ENCODE measurements at regions of chr9 and their contacts with region 1.

Region 1: GRCh38 chr9:34536685-34537084 is 13.9 kb upstream of the ENHO start:
- DNase-seq: no peak
- H3K4me3 Mint-ChIP-seq: no peak overlapping the region
- H3K27ac Mint-ChIP-seq: no peak overlapping the region
- H3K4me1 Mint-ChIP-seq: no peaks in the 10 kb centered on the region
- H3K27me3 Mint-ChIP-seq: peaks cover 12% of the 10 kb centered on the region

Region 2: DNA sequence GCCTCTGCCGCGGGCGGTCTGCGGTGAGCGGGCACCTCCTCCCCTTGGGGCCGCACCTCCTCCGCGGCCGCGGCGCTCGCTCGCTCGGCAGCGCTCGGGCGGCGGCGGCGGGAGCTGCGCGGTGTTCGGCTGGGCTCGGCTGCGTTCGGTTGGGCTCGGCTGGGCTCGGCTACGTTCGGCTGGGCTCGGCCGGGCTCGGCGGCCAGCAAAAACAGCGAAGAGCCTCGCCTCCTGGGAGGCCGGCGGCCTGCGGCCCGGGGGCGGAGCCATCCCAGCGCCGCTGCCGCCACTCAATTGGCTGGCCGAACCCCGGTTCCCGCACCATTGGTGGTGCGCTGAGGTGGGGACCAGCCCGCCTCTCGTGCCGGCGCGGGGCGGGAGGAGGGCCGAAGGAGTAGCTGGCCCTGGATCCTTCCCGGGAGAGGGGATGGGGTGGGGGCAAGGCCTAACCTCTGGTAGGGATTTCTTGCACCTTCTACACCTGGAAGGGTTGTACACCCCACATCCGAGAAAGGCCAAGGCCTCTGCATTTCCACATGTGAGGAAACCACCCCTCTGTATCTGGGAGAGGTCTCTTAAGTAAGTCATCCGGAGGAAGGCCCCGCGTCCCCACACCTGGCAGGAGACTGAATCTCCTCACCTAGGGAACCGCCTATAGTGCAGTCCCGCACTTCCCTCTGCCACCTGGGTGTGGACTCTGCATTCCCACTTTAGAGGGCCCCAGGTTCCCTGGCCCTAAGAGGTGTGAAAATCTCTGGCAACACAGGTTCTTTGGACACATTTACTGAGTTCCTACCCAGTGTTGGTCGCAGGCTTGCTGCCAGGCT is 13.5 kb before region 1 on chr9 and contains the start of gene ENHO:
- CTCF ChIA-PET with region 1: interaction called, 10 read pairs
- POLR2A ChIA-PET with region 1: no interaction called
- DNase-seq: peak; percentile 85
- H3K4me3 Mint-ChIP-seq: peak within 1 kb of the TSS; percentile 61
- H3K27ac Mint-ChIP-seq: no peak within 1 kb of the TSS
- H3K4me1 Mint-ChIP-seq: peaks cover 22% of the 10 kb centered on the region
- H3K27me3 Mint-ChIP-seq: peaks cover 40% of the 10 kb centered on the region
- total RNA-seq, gene ENHO: not detected

Region 3: DNA sequence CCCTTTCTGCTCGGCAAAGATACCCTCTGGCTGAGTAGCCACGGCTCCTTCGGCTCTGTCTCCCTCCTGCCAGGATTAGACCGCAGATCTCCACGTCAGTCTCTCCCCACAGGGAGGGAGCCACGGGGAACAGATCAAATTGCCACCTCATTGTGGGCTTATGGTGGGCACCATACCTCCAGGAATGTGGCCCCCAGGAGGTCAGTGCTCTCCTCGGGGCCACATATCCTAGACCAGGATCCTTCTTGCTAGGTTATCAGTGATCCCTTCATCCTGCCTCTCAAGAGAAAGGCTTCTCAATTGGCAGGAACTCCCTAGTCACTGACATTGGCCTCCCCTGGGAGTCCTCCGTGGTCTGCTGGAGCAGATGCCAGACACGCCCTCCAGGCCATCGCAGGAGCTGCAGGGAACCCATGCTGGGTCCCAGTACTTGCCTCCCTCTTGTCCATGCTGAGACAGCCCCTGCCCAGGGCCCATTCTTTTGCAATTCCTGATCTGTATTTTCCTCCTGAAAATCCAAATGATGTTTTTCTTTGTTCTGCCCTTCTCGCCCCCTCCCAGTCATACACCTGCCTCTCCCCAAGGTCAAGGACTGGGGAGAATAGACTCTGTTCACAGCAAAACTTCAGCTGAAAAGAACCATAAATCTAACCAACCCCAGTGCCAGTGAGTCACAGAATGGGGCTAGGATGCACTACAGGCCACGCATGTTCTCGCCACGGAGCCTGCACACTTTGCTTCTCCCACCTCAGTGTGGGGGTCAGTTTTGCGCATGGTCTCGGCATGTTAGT is 17.7 kb after region 1 on chr9:
- CTCF ChIA-PET with region 1: no interaction called
- POLR2A ChIA-PET with region 1: no interaction called
- DNase-seq: no peak
- H3K4me3 Mint-ChIP-seq: no peak overlapping the region
- H3K27ac Mint-ChIP-seq: no peak overlapping the region
- H3K4me1 Mint-ChIP-seq: no peaks in the 10 kb centered on the region
- H3K27me3 Mint-ChIP-seq: peaks cover 3% of the 10 kb centered on the region

Measured in activated CD4-positive, alpha-beta T cell treated with anti-CD3 and anti-CD28 coated beads, Interleukin-2, amount 10 ng/mL, durations not matched to agents 7 days and 5 days (primary cell).